A673 (cell line): ENCODE measurements at regions of chr13 and their contacts with region 1.

Region 1: DNA sequence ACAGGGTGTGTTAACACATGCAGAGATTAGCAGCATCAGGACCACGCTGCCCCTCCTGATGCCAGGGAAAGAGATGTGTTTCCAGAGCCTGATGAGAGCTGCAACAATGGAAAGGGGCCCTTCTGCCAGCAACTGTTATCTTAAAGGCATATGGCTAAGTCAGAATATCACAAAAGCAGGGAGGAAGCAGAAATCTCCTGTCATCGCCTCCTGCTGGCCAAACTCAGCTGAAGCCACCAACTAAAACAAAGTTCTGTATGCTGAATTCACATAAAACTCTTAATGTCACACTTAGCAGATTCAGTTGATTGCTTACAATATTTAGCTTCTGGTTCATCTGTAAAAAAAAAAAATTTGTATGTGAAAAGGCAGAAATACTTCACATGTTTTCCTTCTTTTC is 178.2 kb downstream of the GPC5 start:
- DNase-seq: no peak
- H3K4me3 ChIP-seq: no peak overlapping the region
- H3K27ac ChIP-seq: no peak overlapping the region
- H3K4me1 ChIP-seq: no peaks in the 10 kb centered on the region
- H3K27me3 ChIP-seq: no peaks in the 10 kb centered on the region
- CTCF ChIP-seq: peak; percentile 41

Region 2: DNA sequence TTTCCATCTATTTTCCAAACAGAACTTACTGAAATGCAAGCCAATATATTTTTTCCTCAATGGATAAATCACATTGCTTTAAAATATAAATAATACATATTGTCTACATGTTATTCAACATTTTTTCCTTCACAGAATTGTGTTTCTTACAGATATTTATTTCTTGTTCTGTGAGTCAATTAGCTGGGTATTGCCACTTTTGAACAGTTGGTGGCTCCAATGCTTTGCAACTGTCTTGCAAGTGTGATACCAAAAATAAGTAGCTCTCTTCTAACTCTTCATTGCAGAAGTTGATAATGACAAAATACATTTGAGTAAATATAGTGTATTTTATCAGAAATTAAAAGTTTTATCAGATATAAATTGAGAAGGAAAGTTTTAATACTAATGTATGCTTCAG is 195.2 kb before region 1 on chr13:
- CTCF ChIA-PET with region 1: no interaction called
- POLR2A ChIA-PET with region 1: no interaction called
- intact Hi-C with region 1: loop called (anchors 10 kb)
- DNase-seq: peak; percentile 38
- H3K4me3 ChIP-seq: no peak overlapping the region
- H3K27ac ChIP-seq: no peak overlapping the region
- H3K4me1 ChIP-seq: no peaks in the 10 kb centered on the region
- H3K27me3 ChIP-seq: peaks cover under 1% of the 10 kb centered on the region
- CTCF ChIP-seq: peak; percentile 52